Heart left ventricle (tissue), 16 donors: ENCODE measurements at regions of chr1 and their contacts with region 1.

Region 1: GRCh38 chr1:161792740-161793139 is 26.6 kb downstream of the ATF6 start:
- DNase-seq: no peak
- ATAC-seq: peak in 3 of 4 donors; percentile 60 to 71 (median 62)
- H3K4me3 ChIP-seq: no peak overlapping the region
- H3K27ac ChIP-seq: no peak overlapping the region
- H3K4me1 ChIP-seq: no peaks in the 10 kb centered on the region
- H3K27me3 ChIP-seq: no peaks in the 10 kb centered on the region
- CTCF ChIP-seq: peak; percentile 46 to 72 (median 59)
- POLR2A ChIP-seq: no peak

Region 2: DNA sequence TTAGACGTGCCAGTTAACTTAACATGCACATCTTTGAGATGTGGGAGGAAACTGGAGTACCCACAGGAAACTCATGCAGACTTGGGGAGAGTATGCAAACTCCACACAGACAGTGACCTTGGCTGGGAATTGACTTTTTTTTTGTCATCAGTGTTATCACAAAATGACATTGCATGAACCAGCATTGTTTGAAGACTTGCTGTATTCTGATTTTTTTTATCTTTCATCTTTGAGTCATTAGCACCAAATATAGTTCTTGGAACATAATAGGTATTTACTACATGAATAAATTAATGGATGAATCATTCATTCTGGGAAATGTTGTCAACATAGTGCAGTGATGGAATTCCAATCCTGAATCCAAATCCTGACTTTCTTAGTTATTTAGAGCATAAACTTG is 50.4 kb after region 1 on chr1:
- intact Hi-C with region 1: loop called in 1 of 10 experiments (anchors 10 kb)
- DNase-seq: no peak
- ATAC-seq: no peak
- H3K4me3 ChIP-seq: no peak overlapping the region
- H3K27ac ChIP-seq: peak overlapping the region in 1 of 12 donors; percentile 9
- H3K4me1 ChIP-seq: peaks cover 0 to 8% (median 0%) of the 10 kb centered on the region in 12 donors
- H3K27me3 ChIP-seq: no peaks in the 10 kb centered on the region
- CTCF ChIP-seq: no peak
- POLR2A ChIP-seq: no peak

Region 3: GRCh38 chr1:161864577-161864976 is 71.8 kb after region 1 on chr1:
- intact Hi-C with region 1: loop called in 1 of 10 experiments (anchors 10 kb)
- DNase-seq: no peak
- ATAC-seq: peak in 1 of 4 donors; percentile 34
- H3K4me3 ChIP-seq: no peak overlapping the region
- H3K27ac ChIP-seq: no peak overlapping the region
- H3K4me1 ChIP-seq: peaks cover 0 to 2% (median 0%) of the 10 kb centered on the region in 12 donors
- H3K27me3 ChIP-seq: no peaks in the 10 kb centered on the region
- CTCF ChIP-seq: peak in 9 of 12 donors; percentile 12 to 58 (median 42)
- POLR2A ChIP-seq: no peak

Region 4: DNA sequence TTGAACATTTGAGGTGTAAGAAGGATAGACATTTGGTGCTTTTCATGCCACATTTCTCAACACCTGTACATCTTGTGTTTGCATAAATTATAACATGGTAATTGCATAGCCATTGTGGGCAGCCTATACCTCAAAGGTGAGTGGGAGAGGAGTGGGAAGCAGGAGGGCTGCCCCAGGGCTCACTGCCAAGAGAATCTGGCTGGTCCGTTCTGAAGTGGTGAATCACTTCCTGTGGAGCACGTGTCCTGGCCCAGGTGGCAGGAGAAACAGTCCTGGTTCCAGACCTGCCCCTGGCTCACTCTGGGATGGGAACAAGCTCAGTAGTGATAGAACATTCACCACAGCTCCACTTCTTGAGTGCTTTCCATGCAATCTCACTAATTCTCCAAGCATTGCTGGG is 242.5 kb after region 1 on chr1:
- intact Hi-C with region 1: loop called (anchors 1 to 5 kb)
- DNase-seq: no peak
- ATAC-seq: no peak
- H3K4me3 ChIP-seq: no peak overlapping the region
- H3K27ac ChIP-seq: no peak overlapping the region
- H3K4me1 ChIP-seq: peaks cover 0 to 7% (median 0%) of the 10 kb centered on the region in 12 donors
- H3K27me3 ChIP-seq: peaks cover 0 to 5% (median 0%) of the 10 kb centered on the region in 9 donors
- CTCF ChIP-seq: no peak
- POLR2A ChIP-seq: no peak

Region 5: DNA sequence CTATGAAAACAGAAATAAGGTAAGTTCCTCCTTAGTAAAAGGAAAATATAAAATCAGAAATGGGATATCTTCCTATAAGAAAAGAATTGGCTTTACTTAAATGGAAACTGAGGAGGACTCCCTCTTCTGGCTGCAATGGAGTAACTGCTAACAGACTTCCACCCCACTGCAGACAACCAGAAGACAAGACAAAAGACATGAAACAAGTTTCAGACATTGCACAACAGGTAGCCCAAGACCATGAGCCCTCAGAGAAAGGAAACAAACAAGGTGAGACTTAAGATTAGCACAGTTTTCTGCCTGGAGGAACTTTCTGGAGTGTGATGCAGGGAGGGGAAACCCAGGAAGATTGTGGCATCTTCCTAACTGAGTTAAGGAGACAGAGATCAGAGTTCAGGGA is 247.9 kb after region 1 on chr1:
- intact Hi-C with region 1: loop called (anchors 1 to 5 kb)
- DNase-seq: no peak
- ATAC-seq: no peak
- H3K4me3 ChIP-seq: no peak overlapping the region
- H3K27ac ChIP-seq: no peak overlapping the region
- H3K4me1 ChIP-seq: no peaks in the 10 kb centered on the region
- H3K27me3 ChIP-seq: peaks cover 0 to 5% (median 0%) of the 10 kb centered on the region in 9 donors
- CTCF ChIP-seq: peak in 6 of 12 donors; percentile 11 to 40 (median 23)
- POLR2A ChIP-seq: no peak